CD4-positive, alpha-beta memory T cell (primary cell): ENCODE measurements at regions of chr2 and their contacts with region 1.

Region 1: GRCh38 chr2:24971536-24972314 is at the start of gene DNAJC27:
- DNase-seq: peak; percentile 98 to 99 (median 98)
- H3K4me3 ChIP-seq: peak within 1 kb of the TSS; percentile 82 to 95
- H3K4me3 Mint-ChIP-seq: peak within 1 kb of the TSS; percentile 97 to 99 (median 98)
- H3K27ac ChIP-seq: peak within 1 kb of the TSS; percentile 99
- H3K27ac Mint-ChIP-seq: peak within 1 kb of the TSS; percentile 100
- H3K4me1 ChIP-seq: peaks cover 24% of the 10 kb centered on the region
- H3K4me1 Mint-ChIP-seq: peaks cover 9 to 33% (median 20%) of the 10 kb centered on the region in 4 donors
- H3K27me3 ChIP-seq: no peaks in the 10 kb centered on the region
- H3K27me3 Mint-ChIP-seq: no peaks in the 10 kb centered on the region
- total RNA-seq, gene DNAJC27: 13.2 to 14.2 TPM

Region 2: GRCh38 chr2:23312996-23313606 is 1658.6 kb before region 1 on chr2:
- CTCF ChIA-PET with region 1: no interaction called
- POLR2A ChIA-PET with region 1: no interaction called
- intact Hi-C with region 1: no loop called
- DNase-seq: no peak
- H3K4me3 ChIP-seq: no peak overlapping the region
- H3K4me3 Mint-ChIP-seq: no peak overlapping the region
- H3K27ac ChIP-seq: no peak overlapping the region
- H3K27ac Mint-ChIP-seq: no peak overlapping the region
- H3K4me1 ChIP-seq: no peaks in the 10 kb centered on the region
- H3K4me1 Mint-ChIP-seq: no peaks in the 10 kb centered on the region
- H3K27me3 ChIP-seq: no peaks in the 10 kb centered on the region
- H3K27me3 Mint-ChIP-seq: peaks cover 2 to 3% of the 10 kb centered on the region in 2 donors

Region 3: DNA sequence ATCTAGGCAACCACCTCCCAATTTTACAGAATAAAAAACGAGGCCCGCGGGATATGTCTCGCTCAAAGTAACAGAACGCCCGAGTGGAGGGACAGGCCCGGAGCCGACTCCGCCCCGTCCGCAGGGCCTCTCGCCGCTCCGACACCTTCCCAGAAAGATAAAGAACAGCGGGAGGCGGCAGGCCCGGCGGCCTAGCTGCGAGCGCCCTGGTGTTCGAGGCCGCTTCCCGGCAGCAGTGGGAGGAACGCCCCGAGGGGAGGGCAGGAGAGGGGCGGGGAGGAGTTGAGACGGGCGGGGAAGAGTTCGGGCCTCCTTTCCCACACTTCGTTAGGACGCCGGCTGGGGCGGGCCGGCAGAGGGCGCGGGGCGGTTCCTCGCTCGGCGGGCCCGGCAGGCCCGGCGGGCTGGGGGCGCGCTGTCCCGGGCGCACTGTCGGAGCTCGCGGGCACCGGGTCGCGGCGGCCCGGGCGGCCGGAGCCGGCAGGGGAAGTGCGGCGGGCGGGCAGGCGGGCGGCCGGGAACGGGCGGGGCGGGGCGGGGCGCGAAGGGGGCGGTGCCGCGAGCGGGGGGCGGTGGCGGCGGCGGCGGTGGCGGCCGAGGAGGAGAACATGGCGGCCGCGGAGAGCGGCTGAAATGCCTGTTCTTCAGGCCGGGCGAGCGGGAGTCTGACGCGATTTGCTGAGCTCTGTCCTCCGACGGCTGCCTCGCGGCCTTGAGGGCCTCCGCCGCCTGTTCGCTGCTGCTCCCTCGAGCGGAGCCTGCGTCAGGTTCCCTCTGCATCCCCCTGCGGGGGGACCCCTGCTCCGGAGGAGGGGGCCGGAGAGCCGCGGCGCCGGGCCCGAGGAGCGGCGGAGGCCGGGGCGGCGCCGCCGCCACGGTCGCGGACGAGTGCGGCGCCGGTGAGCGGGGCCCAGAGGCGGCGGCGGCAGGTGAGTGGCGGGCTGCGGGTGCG is 480.8 kb before region 1 on chr2 and contains the start of gene NCOA1:
- CTCF ChIA-PET with region 1: no interaction called
- POLR2A ChIA-PET with region 1: no interaction called
- intact Hi-C with region 1: loop called (anchors 2 kb)
- DNase-seq: peak; percentile 90 to 92 (median 92)
- H3K4me3 ChIP-seq: peak within 1 kb of the TSS; percentile 51 to 62
- H3K4me3 Mint-ChIP-seq: peak within 1 kb of the TSS; percentile 87 to 95 (median 90)
- H3K27ac ChIP-seq: peak within 1 kb of the TSS; percentile 84
- H3K27ac Mint-ChIP-seq: peak within 1 kb of the TSS; percentile 94 to 98 (median 97)
- H3K4me1 ChIP-seq: peaks cover 51% of the 10 kb centered on the region
- H3K4me1 Mint-ChIP-seq: peaks cover 39 to 57% (median 50%) of the 10 kb centered on the region in 4 donors
- H3K27me3 ChIP-seq: no peaks in the 10 kb centered on the region
- H3K27me3 Mint-ChIP-seq: no peaks in the 10 kb centered on the region
- total RNA-seq, gene NCOA1: 40.6 to 46.2 TPM

Region 4: DNA sequence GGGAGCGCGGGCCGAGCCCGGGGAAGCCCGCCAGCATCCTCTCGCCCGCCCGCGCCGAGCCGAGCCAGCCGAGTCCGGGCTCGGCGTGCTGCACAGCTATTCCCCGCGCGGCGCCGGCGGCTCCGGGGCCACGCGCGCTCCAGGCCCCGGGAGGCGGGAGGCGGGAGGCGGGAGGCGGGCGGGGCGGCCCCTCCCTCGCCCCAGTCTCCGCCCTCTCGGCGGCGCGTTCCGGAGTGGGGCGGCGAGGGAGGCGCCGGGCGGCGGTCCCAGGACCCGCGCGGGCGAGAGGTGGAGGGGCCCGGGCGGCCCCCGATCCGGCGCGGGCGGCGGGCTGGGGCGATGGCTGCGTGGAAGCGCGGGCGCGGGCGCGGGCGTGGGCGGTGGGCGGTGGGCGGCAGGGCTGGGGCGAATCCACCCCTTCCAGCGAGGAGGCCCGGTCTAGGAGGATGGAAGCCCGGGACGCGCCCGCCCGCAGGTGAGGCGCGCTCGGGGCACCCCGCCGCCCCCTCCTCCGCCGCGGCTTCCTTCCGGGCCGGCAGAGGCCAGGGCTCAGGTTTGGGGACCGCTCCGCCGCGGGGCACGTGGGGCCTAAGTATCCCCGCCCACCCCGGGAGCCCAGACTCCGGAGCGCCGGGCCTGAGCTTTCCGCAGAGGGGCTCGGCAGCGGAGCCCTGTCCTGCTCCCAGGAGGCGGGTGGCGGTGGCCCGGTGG is 51.5 kb before region 1 on chr2 and contains the start of gene ADCY3:
- CTCF ChIA-PET with region 1: interaction called, 3 read pairs
- POLR2A ChIA-PET with region 1: no interaction called
- intact Hi-C with region 1: loop called (anchors 1 kb)
- DNase-seq: peak; percentile 52 to 70 (median 62)
- H3K4me3 ChIP-seq: peak within 1 kb of the TSS; percentile 49 to 62
- H3K4me3 Mint-ChIP-seq: peak within 1 kb of the TSS; percentile 91 to 97 (median 94)
- H3K27ac ChIP-seq: peak within 1 kb of the TSS; percentile 35
- H3K27ac Mint-ChIP-seq: peak within 1 kb of the TSS; percentile 83 to 94 (median 88)
- H3K4me1 ChIP-seq: peaks cover 36% of the 10 kb centered on the region
- H3K4me1 Mint-ChIP-seq: peaks cover 23 to 43% (median 30%) of the 10 kb centered on the region in 4 donors
- H3K27me3 ChIP-seq: no peaks in the 10 kb centered on the region
- H3K27me3 Mint-ChIP-seq: no peaks in the 10 kb centered on the region
- total RNA-seq, gene ADCY3: 14.7 to 14.9 TPM

Region 5: DNA sequence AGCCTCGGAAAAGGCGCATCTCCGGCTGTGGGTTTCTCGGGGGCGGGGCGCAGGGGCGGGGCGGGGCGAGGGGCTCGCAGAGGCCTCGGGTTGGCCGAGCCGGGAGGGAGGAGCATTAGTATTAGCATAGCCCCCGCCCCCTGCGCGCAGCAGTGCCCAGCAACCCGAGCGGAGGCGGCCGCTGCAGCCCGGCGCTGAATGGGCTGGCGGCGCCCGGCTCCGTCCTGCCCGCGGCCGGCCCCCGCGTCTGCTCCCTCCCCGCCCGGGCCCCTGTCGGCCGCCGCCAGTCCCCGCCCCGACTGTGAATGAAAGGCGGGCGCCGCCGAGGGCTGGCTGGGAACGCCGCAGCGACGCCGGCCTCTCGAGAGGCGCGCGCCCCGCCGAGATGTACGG is 70.2 kb after region 1 on chr2 and contains the start of gene EFR3B:
- CTCF ChIA-PET with region 1: interaction called, 7 read pairs
- POLR2A ChIA-PET with region 1: interaction called, 3 read pairs
- intact Hi-C with region 1: loop called (anchors 1 kb)
- DNase-seq: peak; percentile 86 to 94 (median 89)
- H3K4me3 ChIP-seq: peak within 1 kb of the TSS; percentile 42 to 60
- H3K4me3 Mint-ChIP-seq: peak within 1 kb of the TSS; percentile 82 to 92 (median 88)
- H3K27ac ChIP-seq: no peak within 1 kb of the TSS
- H3K27ac Mint-ChIP-seq: peak within 1 kb of the TSS in 5 of 7 donors; percentile 22 to 76 (median 62)
- H3K4me1 ChIP-seq: peaks cover 19% of the 10 kb centered on the region
- H3K4me1 Mint-ChIP-seq: peaks cover 12 to 21% (median 16%) of the 10 kb centered on the region in 4 donors
- H3K27me3 ChIP-seq: peaks cover 24% of the 10 kb centered on the region
- H3K27me3 Mint-ChIP-seq: peaks cover 29 to 37% of the 10 kb centered on the region in 2 donors
- total RNA-seq, gene EFR3B: 0.12 to 0.14 TPM

Region 6: DNA sequence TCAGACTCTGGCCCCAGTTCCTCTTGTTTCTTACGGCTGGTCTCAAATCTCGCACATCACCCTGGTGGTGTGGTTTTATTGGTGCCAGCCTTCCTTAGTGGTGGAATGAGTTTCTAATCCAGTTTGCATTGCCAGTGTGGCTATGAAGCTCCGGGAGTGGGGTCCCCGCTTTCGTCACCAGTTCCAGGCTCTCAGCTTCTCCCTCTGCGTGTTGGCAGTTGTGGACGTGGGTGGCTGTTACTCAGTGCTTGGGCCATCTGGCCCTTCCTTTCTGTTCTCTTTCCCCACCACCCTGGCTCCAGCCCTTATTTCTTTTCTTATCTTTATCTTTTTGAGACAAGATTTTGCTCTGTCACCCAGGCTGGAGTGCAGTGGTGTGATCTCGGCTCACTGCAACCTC is 100.2 kb after region 1 on chr2:
- CTCF ChIA-PET with region 1: no interaction called
- POLR2A ChIA-PET with region 1: no interaction called
- intact Hi-C with region 1: no loop called
- DNase-seq: no peak
- H3K4me3 ChIP-seq: no peak overlapping the region
- H3K4me3 Mint-ChIP-seq: no peak overlapping the region
- H3K27ac ChIP-seq: no peak overlapping the region
- H3K27ac Mint-ChIP-seq: peak overlapping the region in 1 of 7 donors; percentile 30
- H3K4me1 ChIP-seq: no peaks in the 10 kb centered on the region
- H3K4me1 Mint-ChIP-seq: no peaks in the 10 kb centered on the region
- H3K27me3 ChIP-seq: peaks cover 8% of the 10 kb centered on the region
- H3K27me3 Mint-ChIP-seq: peaks cover 11 to 13% of the 10 kb centered on the region in 2 donors

Region 7: DNA sequence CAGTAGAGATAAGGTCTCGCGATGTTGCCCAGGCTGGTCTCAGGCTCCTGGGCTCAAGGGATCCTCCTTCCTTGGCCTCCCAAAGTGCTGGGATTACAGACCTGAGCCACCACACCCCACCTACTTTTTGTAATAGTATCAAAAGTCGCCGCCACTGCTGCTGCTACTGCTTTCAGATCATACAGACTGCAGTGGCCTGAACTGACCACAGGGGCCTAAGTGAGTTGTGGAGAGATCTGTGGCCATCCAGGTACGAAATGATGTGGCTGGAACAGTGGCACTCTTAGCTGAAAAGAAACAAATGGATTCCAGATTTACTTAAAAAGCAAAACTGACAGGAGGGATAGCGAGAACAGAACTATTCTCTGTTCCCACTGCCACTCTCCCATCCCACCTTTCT is 229.5 kb after region 1 on chr2:
- CTCF ChIA-PET with region 1: interaction called, 11 read pairs
- POLR2A ChIA-PET with region 1: no interaction called
- intact Hi-C with region 1: loop called (anchors 1 kb)
- DNase-seq: no peak
- H3K4me3 ChIP-seq: no peak overlapping the region
- H3K4me3 Mint-ChIP-seq: no peak overlapping the region
- H3K27ac ChIP-seq: no peak overlapping the region
- H3K27ac Mint-ChIP-seq: peak overlapping the region in 1 of 7 donors; percentile 37
- H3K4me1 ChIP-seq: peaks cover 9% of the 10 kb centered on the region
- H3K4me1 Mint-ChIP-seq: peaks cover 2 to 19% (median 8%) of the 10 kb centered on the region in 4 donors
- H3K27me3 ChIP-seq: no peaks in the 10 kb centered on the region
- H3K27me3 Mint-ChIP-seq: peaks cover 0 to 3% of the 10 kb centered on the region in 2 donors

Region 8: DNA sequence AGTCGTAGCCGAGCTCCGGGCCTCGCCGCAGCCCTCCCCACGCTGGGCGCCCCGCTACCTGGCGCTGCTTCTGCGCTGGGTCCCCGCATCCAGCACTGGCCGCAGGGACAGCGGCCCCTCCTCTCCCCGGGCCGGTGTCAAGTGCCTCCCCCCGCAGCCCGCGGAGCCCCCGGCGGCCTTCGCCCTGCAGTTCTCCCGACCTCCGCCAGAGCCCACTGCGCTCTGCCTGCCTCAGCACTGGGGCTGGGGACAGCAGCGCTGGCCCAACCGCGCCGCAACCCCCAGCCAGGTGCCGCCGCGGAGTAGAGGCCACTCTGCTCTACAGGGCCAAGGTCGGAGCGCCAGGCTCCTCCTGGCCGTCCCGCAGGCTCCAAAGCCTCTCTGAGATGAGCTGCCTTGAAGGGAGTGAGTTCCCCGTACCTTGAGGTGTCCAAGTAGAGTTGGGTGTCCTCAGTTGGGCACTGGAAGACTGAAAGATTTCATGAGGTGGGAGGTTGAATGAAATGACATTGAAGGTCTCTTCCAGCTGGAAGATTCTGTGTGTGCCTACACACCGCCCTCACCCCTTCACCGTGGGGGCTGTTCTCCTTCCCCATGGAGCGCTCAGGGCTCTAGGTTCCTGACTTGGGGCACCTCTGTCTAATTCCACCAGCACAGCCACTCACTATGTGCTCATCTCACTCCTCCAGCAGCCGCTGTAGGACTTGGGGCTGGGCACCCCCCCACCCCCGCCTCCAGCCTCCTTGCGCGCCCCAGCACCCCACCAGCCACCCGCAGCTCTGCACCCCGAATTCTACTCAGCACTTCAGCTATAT is 370.9 kb after region 1 on chr2:
- CTCF ChIA-PET with region 1: no interaction called
- POLR2A ChIA-PET with region 1: no interaction called
- intact Hi-C with region 1: loop called (anchors 5 kb)
- DNase-seq: peak; percentile 78 to 83 (median 81)
- H3K4me3 ChIP-seq: peak overlapping the region in 1 of 2 donors; percentile 52
- H3K4me3 Mint-ChIP-seq: peak overlapping the region; percentile 66 to 89 (median 82)
- H3K27ac ChIP-seq: no peak overlapping the region
- H3K27ac Mint-ChIP-seq: peak overlapping the region in 3 of 7 donors; percentile 74 to 84 (median 74)
- H3K4me1 ChIP-seq: peaks cover 34% of the 10 kb centered on the region
- H3K4me1 Mint-ChIP-seq: peaks cover 10 to 35% (median 23%) of the 10 kb centered on the region in 4 donors
- H3K27me3 ChIP-seq: no peaks in the 10 kb centered on the region
- H3K27me3 Mint-ChIP-seq: no peaks in the 10 kb centered on the region

Region 9: DNA sequence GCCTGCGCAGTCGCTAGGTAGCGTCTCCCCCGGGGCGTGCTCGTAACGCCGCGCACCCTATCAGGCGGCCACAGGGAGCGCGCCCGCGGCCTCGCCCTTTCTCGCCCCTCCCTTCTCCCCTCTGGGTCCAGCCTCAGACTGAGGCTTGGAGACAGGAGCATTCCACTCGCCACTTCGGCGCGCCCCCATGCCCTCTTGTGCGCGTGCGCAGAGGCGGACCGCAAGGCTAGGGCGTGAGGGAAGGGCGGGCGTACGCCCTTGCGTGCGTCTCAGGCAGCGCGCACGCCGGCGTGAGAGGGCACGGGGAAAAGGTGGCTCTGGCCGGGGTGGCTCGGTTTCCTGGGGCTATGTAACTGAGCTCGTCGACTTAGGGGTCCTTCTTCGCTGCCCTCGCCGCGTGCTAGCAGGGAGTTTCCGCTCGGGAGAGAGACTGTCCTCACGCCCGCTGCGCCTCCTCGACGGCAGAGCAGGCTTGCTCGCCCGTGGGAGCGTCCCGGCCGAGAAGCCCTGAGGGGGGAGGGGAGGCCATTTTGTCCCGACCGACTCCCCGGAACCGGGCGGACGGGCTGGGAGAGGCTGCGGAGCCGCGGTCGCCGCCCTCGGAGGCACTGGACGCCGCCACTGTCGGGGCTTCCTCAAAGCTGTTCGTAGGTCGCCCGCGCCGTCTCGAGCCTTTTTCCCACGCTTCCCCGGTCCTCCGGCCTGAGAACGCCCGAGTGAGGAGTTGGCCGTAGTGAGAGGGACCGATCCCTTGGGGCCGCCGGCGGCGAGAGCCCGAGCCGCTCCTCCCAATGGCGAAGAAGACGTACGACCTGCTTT is 1062.3 kb after region 1 on chr2 and contains the start of gene RAB10:
- CTCF ChIA-PET with region 1: no interaction called
- POLR2A ChIA-PET with region 1: no interaction called
- intact Hi-C with region 1: loop called (anchors 5 kb)
- DNase-seq: peak; percentile 99
- H3K4me3 ChIP-seq: peak within 1 kb of the TSS; percentile 94 to 99
- H3K4me3 Mint-ChIP-seq: peak within 1 kb of the TSS; percentile 94 to 99 (median 97)
- H3K27ac ChIP-seq: peak within 1 kb of the TSS; percentile 86
- H3K27ac Mint-ChIP-seq: peak within 1 kb of the TSS; percentile 89 to 99 (median 97)
- H3K4me1 ChIP-seq: peaks cover 42% of the 10 kb centered on the region
- H3K4me1 Mint-ChIP-seq: peaks cover 16 to 46% (median 36%) of the 10 kb centered on the region in 4 donors
- H3K27me3 ChIP-seq: no peaks in the 10 kb centered on the region
- H3K27me3 Mint-ChIP-seq: no peaks in the 10 kb centered on the region
- total RNA-seq, gene RAB10: 67.8 to 77.2 TPM